Posterior vena cava (tissue), 2 donors: ENCODE measurements at regions of chr9 and their contacts with region 1.

Region 1: GRCh38 chr9:120475341-120475740 is 104.6 kb downstream of the CDK5RAP2 start:
- DNase-seq: no peak

Region 2: DNA sequence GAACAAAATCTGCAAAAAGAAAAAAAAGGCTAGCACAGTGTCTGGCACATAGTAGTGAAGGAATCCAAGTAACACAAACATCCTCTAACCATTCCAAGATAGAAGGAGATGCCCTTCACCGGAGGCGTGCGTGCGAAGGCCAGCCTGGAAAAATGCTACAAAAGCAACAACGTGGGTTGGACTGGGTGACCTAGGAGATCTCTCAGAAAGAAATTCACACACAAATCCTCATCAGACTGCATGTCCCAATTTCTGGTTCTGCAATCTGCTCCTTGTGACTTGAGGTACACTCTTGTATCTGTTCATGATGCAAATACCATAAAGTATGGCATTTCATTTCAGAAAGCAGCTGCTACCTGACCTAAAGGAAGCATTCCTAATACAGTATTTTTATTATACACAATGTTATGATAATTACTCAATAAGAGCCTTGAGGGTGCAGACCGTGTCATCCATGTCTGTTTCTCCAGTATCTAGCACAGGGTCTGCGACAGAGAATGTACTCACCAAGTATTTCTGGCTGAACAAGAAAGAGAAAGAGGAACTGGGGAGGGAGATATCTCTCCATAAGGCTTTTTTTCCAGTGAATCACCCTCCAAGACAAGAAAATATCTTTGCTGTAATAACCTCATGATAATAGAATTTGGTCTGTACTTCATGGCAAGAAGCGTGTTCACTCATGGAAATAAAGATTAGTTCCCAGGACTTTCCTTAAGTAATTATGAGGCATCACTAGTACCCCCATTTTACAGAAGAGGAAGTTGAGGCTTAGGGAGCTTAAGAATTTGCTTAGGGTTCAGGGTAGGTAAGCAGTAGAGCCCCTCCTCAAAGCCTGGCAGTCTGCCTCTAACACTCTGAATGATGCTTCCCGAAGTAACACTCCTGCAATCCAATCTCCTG is 33.7 kb before region 1 on chr9:
- intact Hi-C with region 1: loop called in 1 of 2 experiments (anchors 2 kb)
- DNase-seq: no peak